ENCODE measurements at regions of chr4 and their contacts with region 1.

Region 1: DNA sequence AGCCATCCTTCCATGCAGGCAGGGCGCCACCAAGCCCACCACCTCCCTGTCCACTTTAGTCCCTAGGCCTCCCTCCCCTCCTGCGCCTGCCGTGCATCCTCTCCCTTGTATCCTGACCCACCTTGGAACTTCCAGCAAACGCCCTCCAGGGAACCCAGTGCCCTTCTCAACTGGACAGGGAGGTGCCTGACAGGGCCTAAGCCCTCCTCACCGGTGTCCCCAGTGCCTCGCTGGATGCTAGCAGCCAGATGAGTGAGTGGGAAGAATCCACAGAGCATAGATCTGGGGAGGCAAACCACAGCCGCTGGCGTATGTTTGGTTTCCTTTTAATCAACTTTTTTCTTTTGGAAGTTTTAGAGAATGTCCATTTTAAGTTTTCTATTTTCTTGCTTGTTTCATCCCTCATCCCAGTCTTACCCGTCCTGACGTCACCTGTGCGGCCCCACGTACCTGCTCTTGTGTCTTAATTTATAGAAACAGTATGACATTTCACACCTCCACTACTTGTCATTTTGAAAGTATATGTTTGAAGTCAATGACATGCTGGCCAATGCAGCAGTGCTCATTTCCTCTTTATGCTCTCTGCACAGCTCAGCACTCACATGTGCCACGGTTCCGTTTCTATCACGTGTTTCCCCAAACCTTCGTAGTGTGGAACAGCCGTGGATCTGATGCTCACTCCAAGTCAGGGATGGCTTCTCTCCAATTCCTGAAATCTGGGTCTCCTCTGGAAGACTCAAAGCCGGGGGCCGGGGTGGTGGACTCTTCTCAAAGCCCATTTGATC is 3.4 kb upstream of the HMX1 start:
- DNase-seq: no peak
- H3K4me3 ChIP-seq: no peak overlapping the region
- H3K27me3 ChIP-seq: peaks cover 33% of the 10 kb centered on the region
- CTCF ChIP-seq: no peak

Region 2: GRCh38 chr4:8886612-8887406 is 11.7 kb after region 1 on chr4:
- CTCF ChIA-PET with region 1: interaction called, 11 read pairs
- POLR2A ChIA-PET with region 1: no interaction called
- DNase-seq: no peak
- H3K4me3 ChIP-seq: no peak overlapping the region
- H3K27me3 ChIP-seq: peaks cover 16% of the 10 kb centered on the region
- CTCF ChIP-seq: peak; percentile 35

Measured in BJ (cell line).